Heart right ventricle (tissue), 16 donors: ENCODE measurements at regions of chr12 and their contacts with region 1.

Region 1: GRCh38 chr12:101743724-101744472 is 4.6 kb upstream of the SYCP3 start:
- DNase-seq: no peak
- ATAC-seq: peak in 3 of 8 donors; percentile 20 to 37 (median 24)
- H3K4me3 ChIP-seq: no peak overlapping the region
- H3K27ac ChIP-seq: peak overlapping the region in 2 of 10 donors; percentile 3 to 24
- H3K4me1 ChIP-seq: peaks cover 0 to 2% (median 0%) of the 10 kb centered on the region in 9 donors
- H3K27me3 ChIP-seq: no peaks in the 10 kb centered on the region
- CTCF ChIP-seq: no peak

Region 2: DNA sequence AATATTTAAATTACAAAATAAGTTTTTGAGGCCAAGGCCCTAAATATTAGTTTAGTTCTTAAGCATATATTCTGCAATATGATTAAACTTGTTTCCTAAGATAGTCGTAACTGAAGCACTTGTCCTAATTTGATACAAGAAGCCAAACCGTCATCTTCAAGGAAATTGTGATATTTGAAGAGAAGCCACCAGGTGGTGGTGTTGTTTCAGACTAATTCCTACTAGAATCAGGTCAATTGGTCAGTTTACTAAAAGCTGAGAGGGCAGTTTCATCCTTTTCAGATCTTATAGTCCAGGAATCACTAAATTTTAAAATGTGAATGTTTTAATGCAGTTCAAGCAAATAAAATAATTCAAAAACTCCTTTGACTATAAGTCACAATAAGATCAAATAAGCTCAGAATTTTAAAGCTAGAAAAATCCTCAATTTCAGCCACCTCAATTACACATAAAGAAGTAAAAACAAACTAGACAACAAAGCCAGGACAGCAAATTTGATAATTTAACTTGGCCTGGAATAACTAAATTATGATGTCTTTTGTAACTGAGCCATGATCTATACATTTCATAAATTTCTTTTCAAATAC is 329.3 kb before region 1 on chr12:
- intact Hi-C with region 1: loop called in 1 of 10 experiments (anchors 10 kb)
- DNase-seq: peak in 1 of 2 donors; percentile 30
- ATAC-seq: no peak
- H3K4me3 ChIP-seq: no peak overlapping the region
- H3K27ac ChIP-seq: no peak overlapping the region
- H3K4me1 ChIP-seq: no peaks in the 10 kb centered on the region
- H3K27me3 ChIP-seq: no peaks in the 10 kb centered on the region
- CTCF ChIP-seq: peak; percentile 22 to 67 (median 58)